Sciatic nerve (tissue), 2 donors: ENCODE measurements at regions of chr20 and their contacts with region 1.

Region 1: GRCh38 chr20:25294459-25295385 is 46.8 kb downstream of the PYGB start:
- DNase-seq: no peak
- ATAC-seq: peak; percentile 14

Region 2: GRCh38 chr20:24965065-24965929 is 329.4 kb before region 1 on chr20:
- intact Hi-C with region 1: no loop called
- DNase-seq: peak; percentile 38
- ATAC-seq: no peak

Region 3: GRCh38 chr20:25188218-25188617 is 106.5 kb before region 1 on chr20:
- intact Hi-C with region 1: no loop called
- DNase-seq: no peak
- ATAC-seq: no peak

Region 4: GRCh38 chr20:25360635-25361286 is 66.0 kb after region 1 on chr20:
- intact Hi-C with region 1: no loop called
- DNase-seq: no peak
- ATAC-seq: peak; percentile 67

Region 5: GRCh38 chr20:25390538-25391528 is 96.1 kb after region 1 on chr20 and contains the start of gene ABHD12:
- intact Hi-C with region 1: loop called (anchors 10 kb)
- DNase-seq: peak; percentile 96
- ATAC-seq: peak; percentile 100
- total RNA-seq, gene ABHD12: 70.4 TPM